ENCODE measurements at regions of chr1 and their contacts with region 1.

Region 1: GRCh38 chr1:176949033-176949662 is 215.4 kb downstream of the ASTN1 start:
- DNase-seq: peak; percentile 71
- ATAC-seq: peak; percentile 100
- H3K4me3 ChIP-seq: no peak overlapping the region
- H3K27ac ChIP-seq: no peak overlapping the region
- H3K4me1 ChIP-seq: no peaks in the 10 kb centered on the region
- H3K27me3 ChIP-seq: no peaks in the 10 kb centered on the region; a peak in 1 of 5 replicates
- CTCF ChIP-seq: peak; percentile 84
- EP300 ChIP-seq: no peak
- POLR2A ChIP-seq: no peak
- RAD21 ChIP-seq: peak; percentile 77

Region 2: GRCh38 chr1:176897350-176898236 is 51.6 kb before region 1 on chr1:
- CTCF ChIA-PET with region 1: interaction called, 19 read pairs
- POLR2A ChIA-PET with region 1: no interaction called
- in situ Hi-C with region 1: no loop called
- intact Hi-C with region 1: loop called (anchors 1 kb)
- DNase-seq: peak; percentile 56
- ATAC-seq: peak; percentile 94
- H3K4me3 ChIP-seq: no peak overlapping the region
- H3K27ac ChIP-seq: no peak overlapping the region
- H3K4me1 ChIP-seq: peaks cover 6% of the 10 kb centered on the region; the same call in 1 of the 2 replicates
- H3K27me3 ChIP-seq: peaks cover 0 to 4% of the 10 kb centered on the region in 2 experiments; a peak in 2 of 5 replicates
- CTCF ChIP-seq: peak; percentile 83
- EP300 ChIP-seq: no peak
- POLR2A ChIP-seq: no peak
- RAD21 ChIP-seq: no peak; the same call in 1 of the 2 replicates

Measured in HepG2 (cell line).